Naive thymus-derived CD4-positive, alpha-beta T cell (primary cell): ENCODE measurements at regions of chr3 and their contacts with region 1.

Region 1: GRCh38 chr3:71305231-71306206 is 278.0 kb downstream of the FOXP1 start:
- DNase-seq: peak in 8 of 9 donors; percentile 23 to 46 (median 30)
- ATAC-seq: peak; percentile 51
- H3K4me3 ChIP-seq: peak overlapping the region; percentile 73
- H3K4me3 Mint-ChIP-seq: peak overlapping the region; percentile 84 to 98 (median 95)
- H3K27ac ChIP-seq: peak overlapping the region; percentile 90
- H3K27ac Mint-ChIP-seq: peak overlapping the region in 8 of 9 donors; percentile 68 to 99 (median 98)
- H3K4me1 ChIP-seq: peaks cover 12 to 63% of the 10 kb centered on the region in 2 donors
- H3K4me1 Mint-ChIP-seq: peaks cover 46 to 90% (median 74%) of the 10 kb centered on the region in 7 donors
- H3K27me3 ChIP-seq: no peaks in the 10 kb centered on the region
- H3K27me3 Mint-ChIP-seq: peaks cover 0 to 67% (median 0%) of the 10 kb centered on the region in 5 donors

Region 2: GRCh38 chr3:70550723-70551319 is 754.7 kb before region 1 on chr3:
- CTCF ChIA-PET with region 1: interaction called, 6 read pairs
- POLR2A ChIA-PET with region 1: no interaction called
- intact Hi-C with region 1: loop called (anchors 1 to 10 kb)
- DNase-seq: peak; percentile 44 to 79 (median 69)
- ATAC-seq: peak; percentile 84
- H3K4me3 ChIP-seq: no peak overlapping the region
- H3K4me3 Mint-ChIP-seq: no peak overlapping the region
- H3K27ac ChIP-seq: no peak overlapping the region
- H3K27ac Mint-ChIP-seq: no peak overlapping the region
- H3K4me1 ChIP-seq: no peaks in the 10 kb centered on the region
- H3K4me1 Mint-ChIP-seq: peaks cover 0 to 1% (median 0%) of the 10 kb centered on the region in 7 donors
- H3K27me3 ChIP-seq: no peaks in the 10 kb centered on the region
- H3K27me3 Mint-ChIP-seq: peaks cover 0 to 13% (median 0%) of the 10 kb centered on the region in 5 donors

Region 3: GRCh38 chr3:71006810-71007785 is 298.4 kb before region 1 on chr3:
- CTCF ChIA-PET with region 1: interaction called, 3 read pairs
- POLR2A ChIA-PET with region 1: interaction called, 3 read pairs
- intact Hi-C with region 1: loop called (anchors 1 to 5 kb)
- DNase-seq: peak in 5 of 9 donors; percentile 25 to 45 (median 40)
- ATAC-seq: peak; percentile 54
- H3K4me3 ChIP-seq: no peak overlapping the region
- H3K4me3 Mint-ChIP-seq: peak overlapping the region in 5 of 10 donors; percentile 34 to 62 (median 49)
- H3K27ac ChIP-seq: peak overlapping the region; percentile 74
- H3K27ac Mint-ChIP-seq: peak overlapping the region in 8 of 9 donors; percentile 40 to 91 (median 87)
- H3K4me1 ChIP-seq: peaks cover 20 to 49% of the 10 kb centered on the region in 2 donors
- H3K4me1 Mint-ChIP-seq: peaks cover 35 to 84% (median 75%) of the 10 kb centered on the region in 7 donors
- H3K27me3 ChIP-seq: no peaks in the 10 kb centered on the region
- H3K27me3 Mint-ChIP-seq: no peaks in the 10 kb centered on the region

Region 4: DNA sequence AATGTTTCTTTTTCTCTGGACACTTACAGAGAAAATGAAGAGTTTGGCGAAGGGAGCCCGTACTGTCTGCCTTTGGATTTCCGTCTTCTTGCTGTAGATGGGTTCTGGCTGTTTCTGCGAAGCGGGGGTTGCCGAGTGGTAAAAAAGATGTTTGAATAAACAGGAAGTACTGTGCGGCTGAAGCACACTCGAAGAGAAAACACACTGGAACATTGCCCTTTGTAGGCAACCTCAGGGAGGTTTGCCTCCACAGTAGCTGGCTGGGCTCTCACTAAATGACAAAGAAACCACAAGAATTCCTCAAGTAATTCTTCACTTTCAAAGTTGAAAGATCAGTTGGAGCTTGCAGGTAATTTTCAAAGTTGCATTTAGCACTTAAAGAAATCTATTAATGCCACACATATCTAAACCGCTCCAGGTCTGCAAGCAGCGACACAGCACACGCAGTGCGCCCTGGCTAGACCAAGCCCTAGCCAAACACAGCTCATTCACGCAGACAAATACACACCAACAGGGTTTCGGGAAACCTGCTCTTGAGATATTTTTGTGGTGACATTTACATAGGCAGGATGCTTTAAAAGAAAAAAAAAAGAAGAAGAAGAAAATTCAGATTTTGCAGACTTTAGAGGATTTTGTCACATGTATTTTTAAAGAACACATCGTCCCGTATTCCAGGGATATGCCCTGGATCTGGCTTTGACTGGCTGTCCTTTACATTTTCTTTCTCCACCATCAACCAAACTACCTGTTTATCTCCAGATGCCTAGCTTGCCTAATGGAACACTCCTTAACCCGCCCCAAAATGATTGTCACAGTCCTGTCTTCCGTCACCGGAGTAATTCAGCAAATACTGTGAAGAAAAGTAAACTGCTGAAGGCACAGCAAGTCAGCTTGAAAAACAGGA is 174.8 kb before region 1 on chr3:
- CTCF ChIA-PET with region 1: no interaction called
- POLR2A ChIA-PET with region 1: interaction called, 4 read pairs
- intact Hi-C with region 1: loop called (anchors 2 kb)
- DNase-seq: peak; percentile 33 to 90 (median 85)
- ATAC-seq: peak; percentile 86
- H3K4me3 ChIP-seq: peak overlapping the region; percentile 71
- H3K4me3 Mint-ChIP-seq: peak overlapping the region; percentile 85 to 99 (median 93)
- H3K27ac ChIP-seq: peak overlapping the region; percentile 89
- H3K27ac Mint-ChIP-seq: peak overlapping the region; percentile 94 to 99 (median 97)
- H3K4me1 ChIP-seq: peaks cover 42 to 51% of the 10 kb centered on the region in 2 donors
- H3K4me1 Mint-ChIP-seq: peaks cover 49 to 85% (median 80%) of the 10 kb centered on the region in 7 donors
- H3K27me3 ChIP-seq: no peaks in the 10 kb centered on the region
- H3K27me3 Mint-ChIP-seq: no peaks in the 10 kb centered on the region

Region 5: DNA sequence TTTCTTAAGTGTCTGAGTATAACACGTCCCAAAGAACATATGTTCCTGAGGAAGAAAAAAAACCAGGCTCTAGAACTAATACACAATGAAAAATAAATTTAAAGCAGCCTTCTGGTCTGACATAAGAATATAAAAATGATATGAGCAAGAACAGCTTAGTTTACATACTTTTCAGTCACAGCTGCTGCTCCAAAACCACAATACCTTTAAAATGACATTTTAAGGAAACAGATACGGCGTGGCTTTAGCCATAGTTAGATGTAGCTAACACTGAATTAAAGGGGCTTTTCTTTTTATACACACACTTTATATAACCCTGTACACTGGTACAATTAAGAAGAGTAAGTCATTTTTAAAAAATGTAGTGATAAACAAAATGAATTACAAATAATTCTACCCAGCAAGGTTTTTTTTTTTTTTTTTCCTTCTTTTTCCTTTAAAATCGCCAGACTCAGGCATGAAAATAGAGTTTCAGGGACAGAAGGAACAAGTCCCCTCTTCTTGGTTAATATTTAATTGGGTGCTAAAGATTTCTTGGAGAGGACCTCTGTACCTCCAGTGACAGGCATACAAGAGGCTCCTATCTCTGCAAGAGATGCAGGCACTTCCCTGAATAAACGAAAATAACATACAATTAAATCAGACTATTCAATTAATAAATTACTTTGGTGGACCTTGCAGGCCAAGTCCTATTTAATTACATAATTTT is 12.4 kb after region 1 on chr3:
- CTCF ChIA-PET with region 1: no interaction called
- POLR2A ChIA-PET with region 1: interaction called, 3 read pairs
- intact Hi-C with region 1: loop called in 1 of 2 experiments (anchors 1 kb)
- DNase-seq: no peak
- ATAC-seq: no peak
- H3K4me3 ChIP-seq: no peak overlapping the region
- H3K4me3 Mint-ChIP-seq: peak overlapping the region in 7 of 10 donors; percentile 43 to 74 (median 47)
- H3K27ac ChIP-seq: peak overlapping the region; percentile 46
- H3K27ac Mint-ChIP-seq: peak overlapping the region in 5 of 9 donors; percentile 40 to 94 (median 70)
- H3K4me1 ChIP-seq: peaks cover 0 to 39% of the 10 kb centered on the region in 2 donors
- H3K4me1 Mint-ChIP-seq: peaks cover 3 to 43% (median 34%) of the 10 kb centered on the region in 7 donors
- H3K27me3 ChIP-seq: no peaks in the 10 kb centered on the region
- H3K27me3 Mint-ChIP-seq: peaks cover 0 to 3% (median 0%) of the 10 kb centered on the region in 5 donors

Region 6: GRCh38 chr3:71444028-71444860 is 138.7 kb after region 1 on chr3:
- CTCF ChIA-PET with region 1: no interaction called
- POLR2A ChIA-PET with region 1: interaction called, 7 read pairs
- intact Hi-C with region 1: loop called (anchors 2 kb)
- DNase-seq: peak; percentile 57 to 97 (median 94)
- ATAC-seq: peak; percentile 88
- H3K4me3 ChIP-seq: peak overlapping the region; percentile 12
- H3K4me3 Mint-ChIP-seq: peak overlapping the region; percentile 64 to 86 (median 77)
- H3K27ac ChIP-seq: peak overlapping the region; percentile 90
- H3K27ac Mint-ChIP-seq: peak overlapping the region; percentile 94 to 100 (median 99)
- H3K4me1 ChIP-seq: peaks cover 93 to 96% of the 10 kb centered on the region in 2 donors
- H3K4me1 Mint-ChIP-seq: peaks cover 70 to 100% (median 96%) of the 10 kb centered on the region in 7 donors
- H3K27me3 ChIP-seq: no peaks in the 10 kb centered on the region
- H3K27me3 Mint-ChIP-seq: peaks cover 0 to 2% (median 0%) of the 10 kb centered on the region in 5 donors

Region 7: GRCh38 chr3:71652781-71653413 is 347.4 kb after region 1 on chr3:
- CTCF ChIA-PET with region 1: no interaction called
- POLR2A ChIA-PET with region 1: no interaction called
- intact Hi-C with region 1: no loop called
- DNase-seq: peak in 6 of 9 donors; percentile 3 to 42 (median 23)
- ATAC-seq: peak; percentile 53
- H3K4me3 ChIP-seq: no peak overlapping the region
- H3K4me3 Mint-ChIP-seq: peak overlapping the region in 1 of 10 donors; percentile 23
- H3K27ac ChIP-seq: no peak overlapping the region
- H3K27ac Mint-ChIP-seq: no peak overlapping the region
- H3K4me1 ChIP-seq: no peaks in the 10 kb centered on the region
- H3K4me1 Mint-ChIP-seq: peaks cover 0 to 5% (median 0%) of the 10 kb centered on the region in 7 donors
- H3K27me3 ChIP-seq: no peaks in the 10 kb centered on the region
- H3K27me3 Mint-ChIP-seq: no peaks in the 10 kb centered on the region